IMR-90 (cell line): ENCODE measurements at regions of chr21 and their contacts with region 1.

Region 1: DNA sequence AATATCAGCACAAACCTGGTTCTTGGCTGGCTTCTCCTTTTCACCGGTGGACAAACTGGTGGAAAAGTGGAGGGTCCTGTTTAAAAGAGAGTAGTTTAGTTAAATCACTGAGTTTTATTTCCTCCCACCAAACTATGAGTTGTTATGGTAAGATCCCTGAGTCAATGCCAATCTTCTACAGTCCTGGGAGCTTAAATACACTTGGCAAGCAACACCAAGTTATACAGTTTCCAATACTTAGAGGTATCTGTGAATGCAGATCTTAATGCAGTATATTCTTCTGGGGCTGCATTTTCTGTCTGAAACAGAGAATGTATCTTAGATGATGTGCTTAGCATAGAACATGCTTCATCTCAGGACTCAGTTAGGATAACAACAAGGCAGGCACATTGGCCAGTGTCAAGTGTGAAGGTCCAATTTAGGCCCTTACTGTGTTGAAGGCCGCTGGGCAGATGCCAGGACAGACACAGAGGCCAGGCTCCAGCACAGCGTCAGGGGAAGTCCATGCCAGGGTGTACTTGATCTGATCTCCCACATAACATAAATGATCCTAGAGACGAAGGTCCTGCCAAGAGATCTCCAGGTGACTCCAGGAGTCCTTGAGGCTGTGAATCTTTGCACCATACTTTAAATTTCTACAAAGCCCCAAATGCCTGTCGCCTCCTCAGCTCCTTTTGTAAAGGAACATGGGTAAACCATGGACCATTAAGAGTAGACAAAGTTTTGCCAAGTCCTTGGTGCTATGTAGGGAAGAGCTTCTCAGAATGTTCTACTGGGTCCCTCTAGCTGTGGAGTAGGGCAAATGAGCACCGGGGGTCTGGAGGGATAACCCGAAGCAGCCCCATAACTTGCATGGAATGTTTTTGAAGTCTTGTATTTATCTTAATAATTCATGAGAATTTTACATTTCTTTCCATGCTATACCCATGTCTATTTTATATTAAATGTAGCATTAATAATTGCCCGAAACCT is 76.8 kb downstream of the KCNJ15 start:
- DNase-seq: no peak
- ATAC-seq: peak; percentile 72
- H3K4me3 ChIP-seq: no peak overlapping the region
- H3K27ac ChIP-seq: no peak overlapping the region
- H3K4me1 ChIP-seq: no peaks in the 10 kb centered on the region
- H3K27me3 ChIP-seq: no peaks in the 10 kb centered on the region
- CTCF ChIP-seq: peak; percentile 42
- POLR2A ChIP-seq: no peak
- RAD21 ChIP-seq: peak; percentile 52

Region 2: DNA sequence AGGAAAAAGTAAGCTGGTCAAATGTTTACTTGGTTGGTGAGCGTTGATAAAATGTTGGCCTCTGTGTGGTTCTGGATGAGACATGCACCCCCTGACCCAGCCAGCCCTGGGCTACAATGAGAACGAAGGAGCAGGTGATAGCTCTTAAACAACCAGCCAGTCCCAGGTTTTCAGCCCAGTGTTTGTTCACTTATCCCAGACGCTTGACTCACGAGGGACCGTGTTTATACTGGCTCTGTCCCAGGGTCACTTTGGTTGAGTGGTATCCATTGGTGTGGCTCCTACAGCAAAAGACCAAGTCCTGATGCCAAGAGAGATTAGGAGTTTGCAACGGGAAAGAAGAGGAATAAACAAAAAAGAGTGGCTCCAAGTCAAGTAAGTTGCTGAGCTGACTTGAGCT is 10.1 kb after region 1 on chr21:
- CTCF ChIA-PET with region 1: interaction called, 11 read pairs
- POLR2A ChIA-PET with region 1: no interaction called
- dilution Hi-C with region 1: no loop called
- in situ Hi-C with region 1: no loop called
- intact Hi-C with region 1: no loop called
- DNase-seq: peak; percentile 49
- ATAC-seq: peak; percentile 46
- H3K4me3 ChIP-seq: no peak overlapping the region
- H3K27ac ChIP-seq: no peak overlapping the region
- H3K4me1 ChIP-seq: peaks cover 3% of the 10 kb centered on the region; the same call in 1 of the 2 replicates
- H3K27me3 ChIP-seq: no peaks in the 10 kb centered on the region
- CTCF ChIP-seq: no peak
- POLR2A ChIP-seq: no peak
- RAD21 ChIP-seq: no peak

Region 3: GRCh38 chr21:38414058-38414462 is 80.5 kb after region 1 on chr21:
- CTCF ChIA-PET with region 1: no interaction called
- POLR2A ChIA-PET with region 1: no interaction called
- dilution Hi-C with region 1: no loop called
- in situ Hi-C with region 1: no loop called
- intact Hi-C with region 1: no loop called
- DNase-seq: no peak
- ATAC-seq: no peak
- H3K4me3 ChIP-seq: no peak overlapping the region
- H3K27ac ChIP-seq: no peak overlapping the region
- H3K4me1 ChIP-seq: no peaks in the 10 kb centered on the region
- H3K27me3 ChIP-seq: peaks cover 9% of the 10 kb centered on the region
- CTCF ChIP-seq: no peak
- POLR2A ChIP-seq: no peak
- RAD21 ChIP-seq: no peak

Region 4: DNA sequence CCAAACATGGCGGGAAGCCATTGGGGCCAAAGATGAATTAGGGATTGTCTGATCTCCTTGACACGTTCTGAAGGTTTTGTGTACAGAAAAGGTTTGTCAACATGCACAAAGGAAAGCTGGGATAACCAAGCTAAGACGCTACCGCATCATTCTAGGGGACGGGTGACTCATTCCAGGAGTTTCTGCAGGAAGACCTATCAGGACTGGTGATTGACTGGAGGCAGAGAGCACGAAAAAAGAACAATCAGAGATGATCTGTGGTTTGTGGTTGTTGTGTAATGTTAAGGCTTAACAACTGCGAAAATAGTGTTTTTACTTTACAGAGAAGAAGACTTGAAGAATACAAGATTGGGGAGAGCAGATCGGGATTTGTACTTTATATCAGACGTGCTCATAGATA is 186.9 kb after region 1 on chr21:
- CTCF ChIA-PET with region 1: no interaction called
- POLR2A ChIA-PET with region 1: no interaction called
- dilution Hi-C with region 1: no loop called
- in situ Hi-C with region 1: no loop called
- intact Hi-C with region 1: no loop called
- DNase-seq: no peak
- ATAC-seq: no peak
- H3K4me3 ChIP-seq: no peak overlapping the region
- H3K27ac ChIP-seq: no peak overlapping the region
- H3K4me1 ChIP-seq: no peaks in the 10 kb centered on the region
- H3K27me3 ChIP-seq: peaks cover 23% of the 10 kb centered on the region
- CTCF ChIP-seq: no peak
- POLR2A ChIP-seq: no peak
- RAD21 ChIP-seq: no peak

Region 5: GRCh38 chr21:38531591-38531990 is 198.0 kb after region 1 on chr21:
- CTCF ChIA-PET with region 1: no interaction called
- POLR2A ChIA-PET with region 1: no interaction called
- dilution Hi-C with region 1: no loop called
- in situ Hi-C with region 1: no loop called
- intact Hi-C with region 1: no loop called
- DNase-seq: no peak
- ATAC-seq: no peak
- H3K4me3 ChIP-seq: no peak overlapping the region
- H3K27ac ChIP-seq: no peak overlapping the region
- H3K4me1 ChIP-seq: no peaks in the 10 kb centered on the region
- H3K27me3 ChIP-seq: peaks cover 10% of the 10 kb centered on the region
- CTCF ChIP-seq: no peak
- POLR2A ChIP-seq: no peak
- RAD21 ChIP-seq: no peak

Region 6: DNA sequence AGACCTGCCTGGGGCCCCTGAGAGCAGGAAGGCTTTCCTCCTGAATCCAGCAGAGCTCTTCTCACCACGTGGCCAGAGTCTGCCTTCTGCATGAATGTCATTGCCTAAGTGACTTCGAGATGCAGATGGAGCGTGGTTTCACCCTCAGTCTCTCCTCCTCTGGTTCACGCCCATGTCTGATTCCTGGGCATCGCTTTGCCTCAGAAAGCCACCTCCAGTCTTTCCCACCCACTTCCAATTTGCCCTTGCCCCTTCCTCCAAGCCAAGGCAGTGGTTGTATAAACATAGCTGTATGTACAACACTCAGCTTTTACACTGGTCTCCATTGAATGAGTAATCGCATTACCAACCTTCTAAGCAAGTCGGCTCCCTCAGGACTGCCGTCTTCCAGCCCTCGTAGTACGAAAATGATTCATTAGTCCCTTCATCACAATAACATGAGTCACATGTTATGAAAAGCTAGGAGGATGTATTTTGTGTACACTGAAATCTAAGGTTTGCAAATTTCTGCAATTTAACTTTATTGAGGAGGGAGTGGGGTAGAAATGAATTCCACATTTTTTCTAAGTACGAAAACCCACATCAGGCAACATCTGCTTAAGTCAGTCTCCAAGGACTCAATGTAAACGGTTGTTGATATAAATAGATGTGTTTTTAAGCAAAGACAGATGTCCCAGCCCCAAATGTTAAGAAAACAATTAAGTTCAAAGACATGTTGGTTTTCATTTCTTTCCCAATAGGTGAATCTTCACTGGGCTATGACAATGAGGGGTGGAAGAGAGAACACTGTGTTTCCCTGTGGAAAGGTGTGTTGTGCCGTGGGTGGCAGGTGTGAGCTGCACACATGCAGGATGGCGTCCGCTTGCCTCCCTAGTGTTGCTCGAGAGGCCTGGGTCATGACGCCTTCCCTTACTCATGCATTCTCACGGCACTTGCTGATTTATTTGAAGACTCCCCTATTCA is 439.8 kb after region 1 on chr21:
- CTCF ChIA-PET with region 1: no interaction called
- POLR2A ChIA-PET with region 1: no interaction called
- dilution Hi-C with region 1: no loop called
- in situ Hi-C with region 1: no loop called
- intact Hi-C with region 1: no loop called
- DNase-seq: peak; percentile 99
- ATAC-seq: peak; percentile 77
- H3K4me3 ChIP-seq: no peak overlapping the region
- H3K27ac ChIP-seq: peak overlapping the region; percentile 92
- H3K4me1 ChIP-seq: peaks cover 28% of the 10 kb centered on the region
- H3K27me3 ChIP-seq: no peaks in the 10 kb centered on the region
- CTCF ChIP-seq: no peak
- POLR2A ChIP-seq: 0 out of 2 replicates have a peak, but pooled peaks have one; percentile 7
- RAD21 ChIP-seq: peak; percentile 11; the same call in 1 of the 2 replicates